Naive thymus-derived CD4-positive, alpha-beta T cell (primary cell): ENCODE measurements at regions of chr13 and their contacts with region 1.

Region 1: DNA sequence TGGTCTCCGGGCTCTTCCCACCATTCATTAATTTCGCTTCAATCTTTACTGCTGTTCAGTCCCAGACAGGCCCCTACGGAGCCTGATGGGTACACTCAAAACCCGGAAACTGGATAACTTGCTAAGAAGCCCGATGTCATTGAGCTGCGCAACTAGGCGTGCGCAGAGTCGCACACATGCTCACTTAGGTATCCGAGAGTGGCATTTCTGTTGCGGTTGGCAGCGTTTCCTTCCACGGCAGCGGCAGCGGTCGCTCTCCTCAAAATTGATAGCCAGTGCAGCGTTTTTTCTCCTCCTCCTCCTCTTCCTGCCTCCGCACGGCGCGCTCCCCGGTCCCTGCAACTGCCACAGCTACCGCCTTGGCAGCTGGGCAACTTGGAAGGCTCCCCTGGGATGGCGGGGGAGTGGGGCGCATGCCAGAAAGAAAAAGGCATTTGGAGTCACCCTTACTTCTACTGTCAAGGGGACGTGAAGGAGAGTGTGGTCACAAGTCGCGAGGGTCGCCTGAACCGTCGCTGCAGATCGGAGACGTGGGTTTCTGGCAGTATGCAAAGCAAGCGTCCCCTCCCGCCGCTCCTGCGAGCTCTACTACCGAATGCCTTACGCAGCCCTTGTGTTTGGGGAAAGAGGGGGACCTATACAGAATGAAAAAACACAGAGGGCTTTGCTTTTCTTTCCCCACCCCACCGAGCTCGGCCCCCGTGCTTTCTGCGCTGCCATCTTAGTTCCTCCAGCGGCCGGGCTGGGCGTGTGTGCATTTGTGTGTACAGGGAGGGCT is 2.4 kb upstream of the MYCBP2 start:
- DNase-seq: peak; percentile 56 to 95 (median 93)
- ATAC-seq: peak; percentile 77
- H3K4me3 ChIP-seq: peak overlapping the region; percentile 93
- H3K4me3 Mint-ChIP-seq: peak overlapping the region; percentile 84 to 98 (median 94)
- H3K27ac ChIP-seq: peak overlapping the region; percentile 86
- H3K27ac Mint-ChIP-seq: peak overlapping the region; percentile 87 to 98 (median 94)
- H3K4me1 ChIP-seq: peaks cover 24 to 29% of the 10 kb centered on the region in 2 donors
- H3K4me1 Mint-ChIP-seq: peaks cover 16 to 65% (median 48%) of the 10 kb centered on the region in 7 donors
- H3K27me3 ChIP-seq: no peaks in the 10 kb centered on the region
- H3K27me3 Mint-ChIP-seq: peaks cover 0 to 9% (median 0%) of the 10 kb centered on the region in 5 donors

Region 2: GRCh38 chr13:75549262-75550158 is 1779.8 kb before region 1 on chr13 and contains the start of gene UCHL3:
- CTCF ChIA-PET with region 1: no interaction called
- POLR2A ChIA-PET with region 1: no interaction called
- intact Hi-C with region 1: loop called (anchors 5 to 10 kb)
- DNase-seq: peak; percentile 94 to 99 (median 97)
- ATAC-seq: peak; percentile 97
- H3K4me3 ChIP-seq: peak within 1 kb of the TSS; percentile 95
- H3K4me3 Mint-ChIP-seq: peak within 1 kb of the TSS; percentile 91 to 99 (median 96)
- H3K27ac ChIP-seq: peak within 1 kb of the TSS; percentile 84
- H3K27ac Mint-ChIP-seq: peak within 1 kb of the TSS; percentile 94 to 99 (median 98)
- H3K4me1 ChIP-seq: peaks cover 15% of the 10 kb centered on the region in 2 donors
- H3K4me1 Mint-ChIP-seq: peaks cover 27 to 53% (median 46%) of the 10 kb centered on the region in 7 donors
- H3K27me3 ChIP-seq: no peaks in the 10 kb centered on the region
- H3K27me3 Mint-ChIP-seq: peaks cover 0 to 2% (median 0%) of the 10 kb centered on the region in 5 donors
- total RNA-seq, gene UCHL3: 18.6 to 35.8 (median 20.6) TPM

Region 3: DNA sequence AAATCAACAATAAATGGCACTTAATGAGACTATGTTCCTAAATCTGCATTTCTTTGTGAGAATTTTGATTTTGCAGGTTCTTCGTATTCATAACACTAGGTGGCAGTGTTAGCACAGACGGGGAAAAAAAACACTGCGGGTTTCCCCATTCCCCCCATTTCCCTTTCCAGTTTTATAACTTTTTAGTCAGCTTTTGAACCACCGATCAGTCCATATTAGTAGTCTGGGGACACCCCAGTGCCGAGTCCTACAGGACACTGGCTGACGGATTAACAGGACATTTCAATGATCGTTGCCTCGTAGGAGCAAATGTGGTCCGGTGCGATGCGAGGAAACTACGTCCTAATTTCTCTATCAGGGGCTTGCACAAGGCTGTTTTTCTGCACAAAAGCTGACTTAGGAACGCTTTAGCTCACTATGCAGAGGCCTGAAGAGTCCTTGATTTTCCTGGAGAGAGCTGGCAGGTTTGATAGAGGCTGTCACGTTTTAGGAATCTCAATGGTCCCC is 1458.9 kb before region 1 on chr13:
- CTCF ChIA-PET with region 1: no interaction called
- POLR2A ChIA-PET with region 1: no interaction called
- intact Hi-C with region 1: loop called in 1 of 2 experiments (anchors 2 kb)
- DNase-seq: peak in 6 of 9 donors; percentile 12 to 61 (median 38)
- ATAC-seq: peak; percentile 75
- H3K4me3 ChIP-seq: peak overlapping the region; percentile 50
- H3K4me3 Mint-ChIP-seq: peak overlapping the region; percentile 60 to 85 (median 80)
- H3K27ac ChIP-seq: peak overlapping the region; percentile 52
- H3K27ac Mint-ChIP-seq: peak overlapping the region; percentile 72 to 92 (median 86)
- H3K4me1 ChIP-seq: peaks cover 0 to 13% of the 10 kb centered on the region in 2 donors
- H3K4me1 Mint-ChIP-seq: peaks cover 4 to 29% (median 19%) of the 10 kb centered on the region in 7 donors
- H3K27me3 ChIP-seq: no peaks in the 10 kb centered on the region
- H3K27me3 Mint-ChIP-seq: peaks cover 0 to 13% (median 3%) of the 10 kb centered on the region in 5 donors

Region 4: DNA sequence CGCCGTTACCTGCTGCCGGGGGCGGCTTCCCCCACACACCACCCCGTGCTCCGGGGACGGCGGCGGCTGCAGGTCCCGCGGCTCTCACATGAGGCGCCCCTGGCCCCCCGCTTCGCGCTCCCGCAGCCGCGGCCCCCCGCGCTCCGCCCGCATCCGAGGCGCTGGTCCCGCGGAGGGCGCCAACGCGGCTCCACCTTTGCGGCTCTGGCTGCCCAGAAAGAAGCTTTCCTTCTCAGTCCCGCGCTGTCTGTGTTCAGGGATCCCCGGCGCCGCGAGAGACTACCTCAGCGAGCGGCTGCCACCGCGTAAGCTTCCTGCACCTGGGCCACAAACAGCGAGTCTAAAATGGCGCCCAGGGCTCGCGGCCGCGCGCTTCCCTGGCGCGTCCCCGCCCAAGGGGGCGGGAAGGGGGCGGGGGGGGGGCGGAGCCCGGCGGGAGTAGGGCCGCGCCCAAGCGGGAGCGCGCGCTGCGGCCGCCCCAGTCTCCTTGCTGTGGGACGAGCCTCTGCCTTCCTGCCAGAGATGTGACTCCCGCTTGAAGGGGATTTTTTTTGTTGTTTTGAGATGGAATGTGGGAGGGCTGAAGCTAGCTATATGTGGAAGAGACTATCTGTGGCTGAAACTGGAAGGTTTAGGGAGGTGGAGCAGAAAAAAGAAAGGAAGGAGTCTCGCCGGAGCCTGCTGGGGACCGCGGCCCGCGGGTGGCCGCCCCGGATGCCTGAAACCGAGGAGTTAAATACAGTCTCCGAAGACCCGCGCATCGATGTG is 302.3 kb before region 1 on chr13 and contains the start of gene FBXL3:
- CTCF ChIA-PET with region 1: no interaction called
- POLR2A ChIA-PET with region 1: interaction called, 23 read pairs
- intact Hi-C with region 1: loop called (anchors 1 kb)
- DNase-seq: peak; percentile 77 to 88 (median 84)
- ATAC-seq: peak; percentile 90
- H3K4me3 ChIP-seq: peak within 1 kb of the TSS; percentile 87
- H3K4me3 Mint-ChIP-seq: peak within 1 kb of the TSS; percentile 93 to 100 (median 98)
- H3K27ac ChIP-seq: peak within 1 kb of the TSS; percentile 100
- H3K27ac Mint-ChIP-seq: peak within 1 kb of the TSS; percentile 92 to 99 (median 94)
- H3K4me1 ChIP-seq: peaks cover 30 to 35% of the 10 kb centered on the region in 2 donors
- H3K4me1 Mint-ChIP-seq: peaks cover 36 to 61% (median 51%) of the 10 kb centered on the region in 7 donors
- H3K27me3 ChIP-seq: no peaks in the 10 kb centered on the region
- H3K27me3 Mint-ChIP-seq: peaks cover 0 to 6% (median 3%) of the 10 kb centered on the region in 5 donors
- total RNA-seq, gene FBXL3: 44.2 to 94.2 (median 70.8) TPM

Region 5: GRCh38 chr13:77067519-77067918 is 261.8 kb before region 1 on chr13:
- CTCF ChIA-PET with region 1: no interaction called
- POLR2A ChIA-PET with region 1: no interaction called
- intact Hi-C with region 1: no loop called
- DNase-seq: no peak
- ATAC-seq: no peak
- H3K4me3 ChIP-seq: no peak overlapping the region
- H3K4me3 Mint-ChIP-seq: no peak overlapping the region
- H3K27ac ChIP-seq: no peak overlapping the region
- H3K27ac Mint-ChIP-seq: peak overlapping the region in 2 of 9 donors; percentile 5 to 36
- H3K4me1 ChIP-seq: no peaks in the 10 kb centered on the region
- H3K4me1 Mint-ChIP-seq: peaks cover 0 to 2% (median 0%) of the 10 kb centered on the region in 7 donors
- H3K27me3 ChIP-seq: no peaks in the 10 kb centered on the region
- H3K27me3 Mint-ChIP-seq: no peaks in the 10 kb centered on the region

Region 6: GRCh38 chr13:77310579-77311279 is 18.6 kb before region 1 on chr13:
- CTCF ChIA-PET with region 1: interaction called, 4 read pairs
- POLR2A ChIA-PET with region 1: interaction called, 6 read pairs
- intact Hi-C with region 1: loop called (anchors 1 to 2 kb)
- DNase-seq: no peak
- ATAC-seq: no peak
- H3K4me3 ChIP-seq: no peak overlapping the region
- H3K4me3 Mint-ChIP-seq: peak overlapping the region in 7 of 10 donors; percentile 41 to 69 (median 55)
- H3K27ac ChIP-seq: peak overlapping the region; percentile 16
- H3K27ac Mint-ChIP-seq: peak overlapping the region in 8 of 9 donors; percentile 4 to 82 (median 61)
- H3K4me1 ChIP-seq: peaks cover 41 to 63% of the 10 kb centered on the region in 2 donors
- H3K4me1 Mint-ChIP-seq: peaks cover 66 to 99% (median 93%) of the 10 kb centered on the region in 7 donors
- H3K27me3 ChIP-seq: no peaks in the 10 kb centered on the region
- H3K27me3 Mint-ChIP-seq: no peaks in the 10 kb centered on the region

Region 7: DNA sequence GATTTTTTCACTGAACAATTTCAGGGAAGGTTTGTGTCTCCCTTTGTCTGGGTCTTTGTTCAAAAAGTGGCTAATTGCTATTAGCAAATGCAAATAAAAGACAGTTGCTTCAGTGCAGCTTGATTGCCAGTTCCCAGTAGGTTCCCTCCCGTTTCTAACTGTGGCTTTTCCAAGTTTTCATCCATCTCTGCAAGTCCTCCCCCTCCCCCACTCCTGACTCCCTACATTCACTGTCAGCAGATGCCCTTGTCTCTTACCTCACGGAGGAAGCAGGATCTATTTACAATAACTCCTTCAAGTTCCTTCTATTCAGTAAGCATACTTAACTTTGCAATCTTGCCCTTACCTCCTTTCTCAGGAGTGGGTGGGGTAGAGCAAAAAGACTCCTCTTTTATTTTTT is 150.7 kb after region 1 on chr13:
- CTCF ChIA-PET with region 1: interaction called, 13 read pairs
- POLR2A ChIA-PET with region 1: interaction called, 28 read pairs
- intact Hi-C with region 1: loop called (anchors 1 kb)
- DNase-seq: no peak
- ATAC-seq: no peak
- H3K4me3 ChIP-seq: no peak overlapping the region
- H3K4me3 Mint-ChIP-seq: no peak overlapping the region
- H3K27ac ChIP-seq: no peak overlapping the region
- H3K27ac Mint-ChIP-seq: no peak overlapping the region
- H3K4me1 ChIP-seq: no peaks in the 10 kb centered on the region
- H3K4me1 Mint-ChIP-seq: peaks cover 0 to 14% (median 9%) of the 10 kb centered on the region in 7 donors
- H3K27me3 ChIP-seq: no peaks in the 10 kb centered on the region
- H3K27me3 Mint-ChIP-seq: peaks cover 0 to 6% (median 0%) of the 10 kb centered on the region in 5 donors

Region 8: DNA sequence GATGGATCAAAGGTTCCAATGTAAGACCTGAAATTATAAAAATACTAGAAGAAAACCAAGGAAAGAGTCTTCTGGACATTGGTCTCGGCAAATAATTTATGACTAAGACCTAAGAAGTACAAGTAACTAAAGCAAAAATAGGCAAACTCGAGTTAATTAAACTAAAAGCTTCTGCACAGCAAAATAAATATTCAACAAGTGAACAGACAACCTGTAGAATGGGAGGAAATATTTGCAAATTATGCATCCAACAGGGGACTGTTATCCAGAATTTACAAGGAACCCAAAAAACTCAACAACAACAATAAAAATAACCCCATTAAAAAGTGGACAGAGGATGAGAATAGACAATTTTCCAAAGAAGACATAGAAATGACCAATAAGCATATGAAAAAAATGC is 358.5 kb after region 1 on chr13:
- CTCF ChIA-PET with region 1: no interaction called
- POLR2A ChIA-PET with region 1: no interaction called
- intact Hi-C with region 1: no loop called
- DNase-seq: no peak
- ATAC-seq: no peak
- H3K4me3 ChIP-seq: no peak overlapping the region
- H3K4me3 Mint-ChIP-seq: no peak overlapping the region
- H3K27ac ChIP-seq: no peak overlapping the region
- H3K27ac Mint-ChIP-seq: no peak overlapping the region
- H3K4me1 ChIP-seq: no peaks in the 10 kb centered on the region
- H3K4me1 Mint-ChIP-seq: no peaks in the 10 kb centered on the region
- H3K27me3 ChIP-seq: no peaks in the 10 kb centered on the region
- H3K27me3 Mint-ChIP-seq: peaks cover 0 to 39% (median 0%) of the 10 kb centered on the region in 5 donors

Region 9: GRCh38 chr13:78658635-78659449 is 1329.5 kb after region 1 on chr13 and contains the start of gene OBI1:
- CTCF ChIA-PET with region 1: no interaction called
- POLR2A ChIA-PET with region 1: no interaction called
- intact Hi-C with region 1: loop called in 1 of 2 experiments (anchors 2 kb)
- DNase-seq: peak; percentile 84 to 94 (median 90)
- ATAC-seq: peak; percentile 99
- H3K4me3 ChIP-seq: peak within 1 kb of the TSS; percentile 94
- H3K4me3 Mint-ChIP-seq: peak within 1 kb of the TSS; percentile 91 to 100 (median 98)
- H3K27ac ChIP-seq: peak within 1 kb of the TSS; percentile 71
- H3K27ac Mint-ChIP-seq: peak within 1 kb of the TSS; percentile 91 to 98 (median 95)
- H3K4me1 ChIP-seq: peaks cover 10 to 11% of the 10 kb centered on the region in 2 donors
- H3K4me1 Mint-ChIP-seq: peaks cover 22 to 55% (median 47%) of the 10 kb centered on the region in 7 donors
- H3K27me3 ChIP-seq: no peaks in the 10 kb centered on the region
- H3K27me3 Mint-ChIP-seq: no peaks in the 10 kb centered on the region
- total RNA-seq, gene OBI1: 4.2 to 17.7 (median 15.9) TPM